A549 (cell line): ENCODE measurements at regions of chr9 and their contacts with region 1.

Region 1: DNA sequence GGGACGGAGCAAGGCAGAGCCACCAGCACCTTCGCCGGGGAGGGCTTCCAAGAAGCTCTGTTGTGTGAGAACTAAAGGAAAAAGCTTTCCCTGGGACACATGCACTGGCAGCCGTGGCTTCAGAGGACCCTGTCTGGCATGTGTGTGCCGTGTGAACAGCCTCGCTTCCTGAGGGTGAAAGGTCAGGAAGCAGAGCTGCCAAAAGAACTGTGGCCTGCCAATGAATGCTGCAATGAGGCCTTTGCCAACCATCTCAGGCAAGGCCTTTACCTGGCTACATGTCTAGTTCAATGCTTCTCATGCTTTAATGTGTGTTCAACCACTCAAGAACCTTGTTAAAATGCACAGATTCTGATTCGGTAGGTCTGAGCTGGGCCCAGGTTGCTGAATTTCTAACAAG is 53.5 kb downstream of the NIPSNAP3B start:
- DNase-seq: no peak
- ATAC-seq: no peak
- H3K4me3 ChIP-seq: no peak overlapping the region
- H3K27ac ChIP-seq: no peak overlapping the region
- H3K4me1 ChIP-seq: no peaks in the 10 kb centered on the region
- CTCF ChIP-seq: no peak
- EP300 ChIP-seq: no peak
- POLR2A ChIP-seq: no peak
- RAD21 ChIP-seq: no peak

Region 2: DNA sequence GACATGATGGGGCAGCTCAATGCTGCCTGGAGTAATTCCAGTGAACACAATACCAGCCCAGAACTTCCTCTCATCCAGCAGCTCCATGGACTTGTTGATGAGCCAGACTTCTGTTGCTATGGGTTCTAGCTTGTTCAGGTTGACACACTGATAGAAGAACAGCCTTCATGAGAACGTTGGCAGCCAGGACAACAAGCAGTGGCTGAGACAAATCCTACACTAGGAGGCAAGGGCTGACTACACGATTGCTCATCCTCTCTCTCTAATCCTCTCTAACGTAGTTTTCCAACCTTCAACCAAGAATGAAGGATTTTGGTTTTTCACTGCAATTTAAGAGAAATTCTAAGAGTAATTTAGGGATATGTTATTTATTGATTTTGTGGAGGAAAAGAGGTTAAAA is 14.2 kb after region 1 on chr9:
- CTCF ChIA-PET with region 1: interaction called, 10 read pairs
- POLR2A ChIA-PET with region 1: no interaction called
- DNase-seq: peak in 1 of 2 experiments; percentile 4
- ATAC-seq: no peak
- H3K4me3 ChIP-seq: no peak overlapping the region
- H3K27ac ChIP-seq: no peak overlapping the region
- H3K4me1 ChIP-seq: 0 out of 3 replicates have a peak, but pooled peaks cover 7% of the 10 kb centered on the region
- CTCF ChIP-seq: no peak
- EP300 ChIP-seq: no peak
- POLR2A ChIP-seq: no peak
- RAD21 ChIP-seq: no peak

Region 3: DNA sequence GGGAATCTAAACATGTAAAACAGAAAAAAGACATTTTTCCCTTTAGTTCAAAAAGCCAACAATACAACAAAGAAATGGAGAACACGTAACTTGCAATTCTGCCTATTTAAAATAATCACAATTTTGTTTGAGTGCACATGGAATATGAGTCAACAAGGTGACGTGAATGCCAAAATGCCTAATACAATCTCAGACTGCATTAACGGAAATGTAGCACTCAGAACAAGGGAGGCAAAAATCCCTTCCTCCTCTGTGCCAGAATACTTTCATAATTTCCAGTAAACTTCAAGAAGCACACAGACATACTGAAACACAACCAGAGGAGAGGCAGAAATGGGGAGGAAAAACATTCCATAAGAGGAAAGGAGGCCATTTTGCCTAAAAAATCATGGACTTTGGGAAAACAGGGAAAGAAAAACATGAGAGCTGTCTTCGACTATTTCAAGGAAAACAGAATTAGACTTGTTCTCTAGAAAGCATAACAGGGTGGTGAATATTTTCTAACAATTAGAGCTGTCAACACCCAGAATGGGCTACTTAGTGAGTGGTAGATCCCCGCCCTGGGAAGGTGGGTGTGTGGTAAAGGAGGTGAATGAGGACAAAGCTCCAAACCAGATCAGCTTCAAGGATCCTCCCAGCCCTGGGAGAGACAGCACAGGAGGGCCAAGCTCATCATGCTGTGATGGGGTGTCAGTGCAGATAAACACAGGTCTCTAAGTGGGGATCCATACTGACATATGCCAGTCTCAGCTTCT is 62.3 kb after region 1 on chr9:
- CTCF ChIA-PET with region 1: no interaction called
- POLR2A ChIA-PET with region 1: no interaction called
- DNase-seq: no peak
- ATAC-seq: no peak
- H3K4me3 ChIP-seq: no peak overlapping the region
- H3K27ac ChIP-seq: no peak overlapping the region
- H3K4me1 ChIP-seq: no peaks in the 10 kb centered on the region
- CTCF ChIP-seq: no peak
- EP300 ChIP-seq: no peak
- POLR2A ChIP-seq: no peak
- RAD21 ChIP-seq: no peak